CD14-positive monocyte (primary cell): ENCODE measurements at regions of chr7 and their contacts with region 1.

Region 1: DNA sequence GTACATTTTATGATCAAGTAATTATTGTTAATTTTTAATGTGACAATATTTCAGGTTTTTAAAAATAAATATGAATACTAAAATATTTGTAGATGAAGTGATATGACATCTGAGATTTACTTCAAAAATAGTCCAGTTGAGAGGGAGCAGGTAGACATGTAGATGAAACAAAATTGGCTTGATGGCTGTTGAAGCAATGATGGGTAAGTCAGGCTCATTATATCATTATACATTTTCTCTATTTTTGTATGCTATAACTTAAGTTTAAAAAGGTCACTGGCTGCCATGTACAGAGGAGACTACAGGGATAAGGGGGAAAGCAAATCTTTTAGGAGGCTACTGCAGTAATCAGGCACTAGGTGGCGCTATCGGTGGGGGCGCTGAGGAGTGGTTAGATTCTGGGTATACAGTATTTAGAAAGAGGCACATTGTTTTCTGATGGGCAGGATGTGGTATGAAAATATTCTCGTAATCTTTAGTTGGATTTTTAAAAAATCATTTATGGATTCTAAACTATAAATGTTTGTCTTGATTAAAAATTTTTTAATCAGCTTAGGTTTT is 189.8 kb upstream of the IMMP2L start:
- DNase-seq: peak; percentile 33 to 51 (median 47)
- H3K4me3 ChIP-seq: no peak overlapping the region
- H3K4me3 Mint-ChIP-seq: no peak overlapping the region
- H3K27ac ChIP-seq: no peak overlapping the region
- H3K27ac Mint-ChIP-seq: no peak overlapping the region
- H3K4me1 ChIP-seq: no peaks in the 10 kb centered on the region
- H3K4me1 Mint-ChIP-seq: no peaks in the 10 kb centered on the region
- H3K27me3 ChIP-seq: no peaks in the 10 kb centered on the region
- H3K27me3 Mint-ChIP-seq: peaks cover 0 to 1% (median 0%) of the 10 kb centered on the region in 3 donors
- CTCF ChIP-seq: peak; percentile 84

Region 2: GRCh38 chr7:111878785-111879184 is 126.7 kb after region 1 on chr7:
- intact Hi-C with region 1: no loop called
- DNase-seq: no peak
- H3K4me3 ChIP-seq: no peak overlapping the region
- H3K4me3 Mint-ChIP-seq: no peak overlapping the region
- H3K27ac ChIP-seq: no peak overlapping the region
- H3K27ac Mint-ChIP-seq: no peak overlapping the region
- H3K4me1 ChIP-seq: no peaks in the 10 kb centered on the region
- H3K4me1 Mint-ChIP-seq: no peaks in the 10 kb centered on the region
- H3K27me3 ChIP-seq: no peaks in the 10 kb centered on the region
- H3K27me3 Mint-ChIP-seq: peaks cover 0 to 3% (median 0%) of the 10 kb centered on the region in 3 donors
- CTCF ChIP-seq: no peak

Region 3: GRCh38 chr7:112286250-112287086 is 534.4 kb after region 1 on chr7:
- intact Hi-C with region 1: no loop called
- DNase-seq: no peak
- H3K4me3 ChIP-seq: no peak overlapping the region
- H3K4me3 Mint-ChIP-seq: no peak overlapping the region
- H3K27ac ChIP-seq: no peak overlapping the region
- H3K27ac Mint-ChIP-seq: peak overlapping the region in 1 of 7 donors; percentile 50
- H3K4me1 ChIP-seq: no peaks in the 10 kb centered on the region
- H3K4me1 Mint-ChIP-seq: no peaks in the 10 kb centered on the region
- H3K27me3 ChIP-seq: no peaks in the 10 kb centered on the region
- H3K27me3 Mint-ChIP-seq: no peaks in the 10 kb centered on the region
- CTCF ChIP-seq: no peak

Region 4: GRCh38 chr7:112414855-112415490 is 662.9 kb after region 1 on chr7:
- intact Hi-C with region 1: loop called (anchors 5 to 10 kb)
- DNase-seq: peak in 2 of 3 donors; percentile 5 to 11
- H3K4me3 ChIP-seq: no peak overlapping the region
- H3K4me3 Mint-ChIP-seq: no peak overlapping the region
- H3K27ac ChIP-seq: no peak overlapping the region
- H3K27ac Mint-ChIP-seq: no peak overlapping the region
- H3K4me1 ChIP-seq: no peaks in the 10 kb centered on the region
- H3K4me1 Mint-ChIP-seq: peaks cover 3% of the 10 kb centered on the region
- H3K27me3 ChIP-seq: peaks cover 0 to 2% of the 10 kb centered on the region in 2 donors
- H3K27me3 Mint-ChIP-seq: peaks cover 2 to 3% (median 2%) of the 10 kb centered on the region in 3 donors
- CTCF ChIP-seq: peak; percentile 65

Region 5: GRCh38 chr7:112898432-112899290 is 1146.6 kb after region 1 on chr7:
- intact Hi-C with region 1: loop called in 1 of 2 experiments (anchors 10 kb)
- DNase-seq: peak; percentile 53 to 64 (median 64)
- H3K4me3 ChIP-seq: no peak overlapping the region
- H3K4me3 Mint-ChIP-seq: no peak overlapping the region
- H3K27ac ChIP-seq: peak overlapping the region in 1 of 2 donors; percentile 15
- H3K27ac Mint-ChIP-seq: peak overlapping the region in 2 of 7 donors; percentile 18 to 26
- H3K4me1 ChIP-seq: no peaks in the 10 kb centered on the region
- H3K4me1 Mint-ChIP-seq: peaks cover under 1% of the 10 kb centered on the region
- H3K27me3 ChIP-seq: no peaks in the 10 kb centered on the region
- H3K27me3 Mint-ChIP-seq: peaks cover 0 to 2% (median 0%) of the 10 kb centered on the region in 3 donors
- CTCF ChIP-seq: peak; percentile 86